ENCODE measurements at regions of chr3 and their contacts with region 1.

Region 1: DNA sequence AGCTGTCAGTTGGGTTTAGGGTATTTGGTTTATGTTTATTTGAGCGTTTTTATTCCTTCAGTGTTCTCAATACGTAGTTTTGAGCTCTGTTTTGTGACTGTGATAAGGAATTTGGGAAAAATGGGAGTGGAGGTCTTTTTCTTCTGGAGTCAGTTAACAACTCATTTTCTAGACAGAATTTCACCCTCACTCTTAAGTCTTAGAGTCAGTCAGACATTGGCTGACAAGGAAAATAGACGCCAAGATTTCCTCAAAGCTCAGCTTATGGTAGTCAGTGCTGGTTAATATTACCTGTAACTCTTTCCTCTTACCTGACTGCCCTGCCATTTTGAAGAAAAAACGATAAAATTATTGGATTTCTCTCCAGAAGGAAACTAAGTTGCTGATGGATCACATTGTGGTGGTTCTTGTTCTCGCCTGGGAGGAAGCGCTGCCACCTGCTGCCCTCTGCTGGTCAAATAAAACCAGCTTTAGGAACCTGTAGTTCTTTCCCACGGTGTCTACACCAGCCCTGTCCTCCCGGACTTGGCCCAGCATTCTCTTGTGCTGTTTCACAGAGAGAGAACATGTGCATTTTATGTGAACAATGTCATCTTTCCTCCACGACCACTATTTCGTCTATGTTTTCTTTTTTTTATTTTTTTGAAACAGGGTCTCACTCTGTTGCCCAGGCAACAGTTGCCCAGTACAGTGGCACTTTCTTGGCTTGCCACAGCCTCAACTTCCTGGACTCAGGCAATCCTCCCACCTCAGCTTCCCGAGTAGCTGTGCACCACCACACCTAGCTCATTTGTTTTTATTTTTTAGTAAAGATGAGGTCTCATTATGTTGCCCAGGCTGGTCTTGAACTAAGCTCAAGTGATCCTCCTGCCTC is 41.4 kb upstream of the UMPS start:
- DNase-seq: peak; percentile 79
- CTCF ChIP-seq: peak; percentile 80

Region 2: DNA sequence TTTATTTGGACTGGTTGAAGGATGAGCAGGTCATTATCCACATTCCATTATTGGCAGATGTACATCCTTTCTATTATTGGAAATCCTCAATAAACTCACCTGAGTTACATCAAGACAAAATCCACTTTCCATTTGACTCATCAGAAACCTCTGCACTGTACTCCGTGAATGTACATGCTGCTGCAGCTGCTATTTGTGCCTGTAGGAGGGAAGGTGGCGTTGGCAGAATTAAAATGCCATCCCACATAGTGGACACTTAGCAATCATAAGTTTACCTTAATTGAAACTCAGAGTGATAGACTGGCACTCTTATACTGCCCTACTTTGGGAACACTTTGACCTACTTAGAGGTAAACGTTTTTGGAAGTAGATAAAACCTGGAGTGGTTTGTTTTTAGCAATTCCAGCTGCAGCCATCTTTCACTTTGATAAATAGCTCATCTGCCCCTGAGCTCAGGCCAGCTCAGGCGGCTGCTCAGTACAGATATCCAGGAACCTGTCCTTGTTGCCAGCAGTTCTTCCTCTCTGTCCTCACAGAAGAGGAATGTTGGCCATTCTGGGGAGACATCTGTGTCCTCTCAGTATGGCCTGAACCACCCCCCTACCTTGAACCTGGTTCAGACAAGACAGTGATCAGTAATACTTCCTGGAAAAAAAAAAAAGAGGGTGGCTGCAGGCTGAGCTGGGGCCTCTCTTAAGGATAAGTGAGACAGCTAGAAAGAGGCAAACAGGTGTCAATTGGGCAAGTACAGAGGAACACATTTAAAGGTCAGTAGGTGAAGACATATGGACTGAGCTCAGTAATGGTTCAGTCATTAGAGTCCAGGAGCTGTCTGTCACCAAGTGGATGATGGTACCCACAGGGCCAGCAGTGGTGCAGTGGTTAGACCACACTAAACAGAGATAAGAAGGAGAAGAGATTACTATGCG is 112.0 kb before region 1 on chr3:
- in situ Hi-C with region 1: loop called (anchors 5 kb)
- DNase-seq: no peak
- CTCF ChIP-seq: no peak